ENCODE measurements at regions of chr14 and their contacts with region 1.

Region 1: GRCh38 chr14:105817971-105818711 is 291.8 kb downstream of the TMEM121 start:
- DNase-seq: peak; percentile 74
- ATAC-seq: peak; percentile 85
- H3K4me3 Mint-ChIP-seq: peak overlapping the region; percentile 74
- H3K27ac Mint-ChIP-seq: peak overlapping the region; percentile 97
- H3K4me1 Mint-ChIP-seq: peaks cover 63% of the 10 kb centered on the region
- H3K27me3 Mint-ChIP-seq: no peaks in the 10 kb centered on the region
- CTCF ChIP-seq: no peak

Region 2: GRCh38 chr14:105549481-105549880 is 268.7 kb before region 1 on chr14:
- CTCF ChIA-PET with region 1: no interaction called
- POLR2A ChIA-PET with region 1: no interaction called
- intact Hi-C with region 1: no loop called
- DNase-seq: no peak
- ATAC-seq: no peak
- H3K4me3 Mint-ChIP-seq: no peak overlapping the region
- H3K27ac Mint-ChIP-seq: no peak overlapping the region
- H3K4me1 Mint-ChIP-seq: no peaks in the 10 kb centered on the region
- H3K27me3 Mint-ChIP-seq: no peaks in the 10 kb centered on the region
- CTCF ChIP-seq: no peak

Region 3: GRCh38 chr14:105682940-105683570 is 135.1 kb before region 1 on chr14:
- CTCF ChIA-PET with region 1: interaction called, 5 read pairs
- POLR2A ChIA-PET with region 1: no interaction called
- intact Hi-C with region 1: loop called (anchors 1 kb)
- DNase-seq: peak; percentile 24
- ATAC-seq: no peak
- H3K4me3 Mint-ChIP-seq: peak overlapping the region; percentile 76
- H3K27ac Mint-ChIP-seq: peak overlapping the region; percentile 95
- H3K4me1 Mint-ChIP-seq: peaks cover 44% of the 10 kb centered on the region
- H3K27me3 Mint-ChIP-seq: no peaks in the 10 kb centered on the region
- CTCF ChIP-seq: no peak

Region 4: GRCh38 chr14:105748194-105748578 is 70.0 kb before region 1 on chr14:
- CTCF ChIA-PET with region 1: no interaction called
- POLR2A ChIA-PET with region 1: interaction called, 24 read pairs
- intact Hi-C with region 1: no loop called
- DNase-seq: no peak
- ATAC-seq: peak; percentile 70
- H3K4me3 Mint-ChIP-seq: peak overlapping the region; percentile 95
- H3K27ac Mint-ChIP-seq: peak overlapping the region; percentile 93
- H3K4me1 Mint-ChIP-seq: peaks cover 38% of the 10 kb centered on the region
- H3K27me3 Mint-ChIP-seq: no peaks in the 10 kb centered on the region
- CTCF ChIP-seq: no peak

Region 5: GRCh38 chr14:105806566-105806965 is 11.6 kb before region 1 on chr14:
- CTCF ChIA-PET with region 1: no interaction called
- POLR2A ChIA-PET with region 1: interaction called, 17 read pairs
- intact Hi-C with region 1: loop called (anchors 2 kb)
- DNase-seq: no peak
- ATAC-seq: no peak
- H3K4me3 Mint-ChIP-seq: no peak overlapping the region
- H3K27ac Mint-ChIP-seq: no peak overlapping the region
- H3K4me1 Mint-ChIP-seq: no peaks in the 10 kb centered on the region
- H3K27me3 Mint-ChIP-seq: no peaks in the 10 kb centered on the region
- CTCF ChIP-seq: no peak

Region 6: GRCh38 chr14:105853089-105853906 is 35.2 kb after region 1 on chr14:
- CTCF ChIA-PET with region 1: interaction called, 5 read pairs
- POLR2A ChIA-PET with region 1: interaction called, 141 read pairs
- intact Hi-C with region 1: no loop called
- DNase-seq: no peak
- ATAC-seq: peak; percentile 4
- H3K4me3 Mint-ChIP-seq: peak overlapping the region; percentile 98
- H3K27ac Mint-ChIP-seq: peak overlapping the region; percentile 99
- H3K4me1 Mint-ChIP-seq: peaks cover 51% of the 10 kb centered on the region
- H3K27me3 Mint-ChIP-seq: no peaks in the 10 kb centered on the region
- CTCF ChIP-seq: no peak

Region 7: GRCh38 chr14:106294324-106294723 is 476.2 kb after region 1 on chr14:
- CTCF ChIA-PET with region 1: no interaction called
- POLR2A ChIA-PET with region 1: no interaction called
- intact Hi-C with region 1: no loop called
- DNase-seq: no peak
- ATAC-seq: no peak
- H3K4me3 Mint-ChIP-seq: no peak overlapping the region
- H3K27ac Mint-ChIP-seq: no peak overlapping the region
- H3K4me1 Mint-ChIP-seq: peaks cover 15% of the 10 kb centered on the region
- H3K27me3 Mint-ChIP-seq: peaks cover 8% of the 10 kb centered on the region
- CTCF ChIP-seq: no peak

Measured in activated B cell treated with CpG ODN at 0.5 μM for 24 hours (primary cell).